Naive thymus-derived CD4-positive, alpha-beta T cell (primary cell): ENCODE measurements at regions of chr20 and their contacts with region 1.

Region 1: DNA sequence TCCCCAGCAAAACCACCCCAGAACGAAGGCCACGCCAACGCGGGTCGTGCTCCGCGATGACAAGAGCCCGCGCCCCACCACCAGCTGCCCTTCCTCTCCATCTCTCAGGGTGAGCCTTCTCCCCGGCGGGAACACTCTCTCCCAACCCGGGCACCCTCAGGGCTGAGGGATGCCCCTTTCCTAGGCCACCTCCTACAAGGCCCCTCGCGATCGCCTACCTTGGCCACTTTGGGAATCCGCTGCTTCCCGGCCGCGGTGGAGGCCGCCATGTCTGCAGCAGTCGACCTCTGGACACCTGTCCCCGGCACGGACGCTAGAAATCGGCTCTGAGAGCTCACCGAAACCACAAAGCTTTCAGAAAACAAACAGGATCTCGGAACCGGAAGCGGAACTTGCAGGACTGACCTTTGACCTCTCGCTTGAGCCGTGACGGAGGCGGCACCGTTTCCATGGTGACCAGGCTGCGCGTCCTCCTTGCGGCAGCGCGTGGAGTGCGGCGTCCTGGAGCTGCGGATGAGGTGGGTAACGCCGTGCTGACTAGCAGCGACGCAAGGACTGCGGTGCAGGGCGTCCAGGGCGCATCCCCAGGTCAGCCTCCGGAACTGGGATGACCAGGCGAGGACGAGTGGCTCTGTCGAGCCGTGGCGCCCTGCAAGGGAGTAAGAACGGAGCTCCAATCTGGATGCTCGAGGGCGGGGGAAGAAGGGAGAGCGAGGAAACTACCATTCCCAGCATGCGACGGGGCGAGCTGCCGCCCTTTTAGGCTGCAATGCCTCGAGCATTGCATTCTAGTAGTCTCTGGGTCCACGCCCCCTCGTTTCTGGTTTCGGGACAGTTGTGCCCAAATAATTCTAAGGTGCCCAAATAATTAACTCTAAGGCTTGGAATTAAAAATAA is at the starts of genes CFAP61 and CRNKL1:
- DNase-seq: peak; percentile 95 to 99 (median 98)
- ATAC-seq: peak; percentile 96
- H3K4me3 ChIP-seq: peak within 1 kb of the TSS; percentile 99
- H3K4me3 Mint-ChIP-seq: peak within 1 kb of the TSS; percentile 94 to 100 (median 99)
- H3K27ac ChIP-seq: peak within 1 kb of the TSS; percentile 93
- H3K27ac Mint-ChIP-seq: peak within 1 kb of the TSS; percentile 94 to 100 (median 98)
- H3K4me1 ChIP-seq: peaks cover 0 to 16% of the 10 kb centered on the region in 2 donors
- H3K4me1 Mint-ChIP-seq: peaks cover 16 to 42% (median 31%) of the 10 kb centered on the region in 7 donors
- H3K27me3 ChIP-seq: no peaks in the 10 kb centered on the region
- H3K27me3 Mint-ChIP-seq: peaks cover 0 to 6% (median 0%) of the 10 kb centered on the region in 5 donors
- total RNA-seq, gene CFAP61: not detected
- total RNA-seq, gene CRNKL1: 17.4 to 32.1 (median 21.6) TPM

Region 2: DNA sequence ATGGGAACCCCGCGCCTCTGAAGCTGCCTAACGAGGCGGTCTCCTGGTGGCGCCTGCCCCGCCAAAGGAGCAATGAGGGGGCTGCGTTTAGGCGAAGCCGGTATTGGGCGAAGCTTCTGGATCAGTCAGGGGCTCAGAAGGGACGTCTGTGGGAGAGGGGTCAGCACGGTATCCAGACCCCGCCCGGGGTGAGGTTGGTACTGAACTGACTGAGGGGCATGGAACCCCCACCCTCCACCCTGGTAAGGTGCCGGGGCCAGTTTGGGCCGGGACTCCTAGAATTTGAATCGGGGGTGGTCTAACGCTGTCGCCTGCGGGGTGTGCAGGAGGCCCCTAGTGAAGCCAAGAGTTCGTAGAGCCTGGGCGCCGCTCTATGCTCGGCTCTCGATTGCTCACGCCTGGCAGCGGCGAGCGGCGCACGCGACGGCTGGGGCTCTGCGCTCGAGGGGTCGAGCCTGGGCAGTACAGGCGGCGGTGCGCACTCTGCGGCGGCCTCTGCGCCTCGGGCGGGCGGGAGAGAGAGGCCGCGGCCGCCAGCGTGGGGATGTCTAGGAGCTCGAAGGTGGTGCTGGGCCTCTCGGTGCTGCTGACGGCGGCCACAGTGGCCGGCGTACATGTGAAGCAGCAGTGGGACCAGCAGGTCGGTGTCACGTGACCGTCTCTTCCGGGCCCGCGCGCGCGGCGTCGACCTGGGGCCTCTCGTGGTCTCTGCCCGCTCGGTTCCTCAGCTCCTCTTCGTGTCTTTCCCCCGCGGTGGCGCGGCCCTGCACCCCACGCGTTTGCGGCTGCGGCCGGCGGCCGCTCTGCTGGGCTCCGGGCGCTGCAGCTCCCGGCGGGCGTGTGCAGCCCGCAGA is 1914.7 kb before region 1 on chr20 and contains the starts of genes KAT14 and PET117:
- CTCF ChIA-PET with region 1: no interaction called
- POLR2A ChIA-PET with region 1: interaction called, 3 read pairs
- intact Hi-C with region 1: loop called in 1 of 2 experiments (anchors 2 kb)
- DNase-seq: peak; percentile 85 to 96 (median 93)
- ATAC-seq: peak; percentile 98
- H3K4me3 ChIP-seq: peak within 1 kb of the TSS; percentile 99
- H3K4me3 Mint-ChIP-seq: peak within 1 kb of the TSS; percentile 76 to 92 (median 88)
- H3K27ac ChIP-seq: peak within 1 kb of the TSS; percentile 89
- H3K27ac Mint-ChIP-seq: peak within 1 kb of the TSS; percentile 85 to 95 (median 92)
- H3K4me1 ChIP-seq: peaks cover 13 to 15% of the 10 kb centered on the region in 2 donors
- H3K4me1 Mint-ChIP-seq: peaks cover 23 to 44% (median 31%) of the 10 kb centered on the region in 7 donors
- H3K27me3 ChIP-seq: no peaks in the 10 kb centered on the region
- H3K27me3 Mint-ChIP-seq: peaks cover 0 to 7% (median 0%) of the 10 kb centered on the region in 5 donors
- total RNA-seq, gene KAT14: 12.3 to 26.7 (median 16.2) TPM
- total RNA-seq, gene PET117: 9.0 to 20.3 (median 11.7) TPM

Region 3: DNA sequence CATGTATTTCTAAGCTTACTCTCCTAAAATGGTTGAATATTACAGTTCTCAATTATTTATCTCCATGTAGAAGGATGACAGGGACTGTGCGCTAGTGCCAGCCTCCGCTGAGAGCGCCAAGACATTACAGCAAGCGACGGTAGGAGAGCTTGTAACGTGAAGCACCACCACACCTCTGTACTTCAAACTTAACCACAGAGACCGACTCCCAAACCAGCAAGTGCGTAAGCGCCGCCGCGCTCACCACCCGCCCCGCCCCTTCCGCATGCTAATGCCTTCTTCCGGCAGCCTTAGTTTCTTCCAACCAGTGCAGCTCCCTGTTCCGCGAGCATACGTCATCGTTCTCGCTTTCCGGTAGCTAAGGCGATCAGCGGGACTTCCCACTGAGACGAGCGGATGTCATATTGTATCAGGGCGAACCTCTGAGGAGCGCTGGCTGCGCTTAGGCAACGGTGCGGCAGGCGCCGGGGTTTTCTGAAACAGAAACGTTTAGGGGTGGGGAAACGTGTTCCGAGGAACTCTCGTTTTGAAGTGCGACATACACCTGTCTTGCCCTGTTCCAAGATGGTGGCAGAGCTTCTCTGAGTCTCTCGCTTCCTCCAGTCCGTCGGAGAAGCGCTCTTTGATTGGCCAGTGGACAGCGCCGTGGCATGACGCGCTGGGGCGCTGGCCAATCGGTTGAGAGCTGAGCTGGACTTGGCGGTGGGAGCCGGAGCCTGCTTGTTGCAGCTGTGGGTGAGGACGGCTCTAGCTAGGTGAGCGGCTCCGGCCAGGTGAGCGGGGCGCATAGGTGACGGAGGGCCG is 1544.9 kb before region 1 on chr20 and contains the start of gene SEC23B:
- CTCF ChIA-PET with region 1: no interaction called
- POLR2A ChIA-PET with region 1: interaction called, 6 read pairs
- intact Hi-C with region 1: loop called in 1 of 2 experiments (anchors 1 kb)
- DNase-seq: peak; percentile 88 to 100 (median 99)
- ATAC-seq: peak; percentile 91
- H3K4me3 ChIP-seq: peak within 1 kb of the TSS; percentile 74
- H3K4me3 Mint-ChIP-seq: peak within 1 kb of the TSS; percentile 91 to 100 (median 100)
- H3K27ac ChIP-seq: peak within 1 kb of the TSS; percentile 90
- H3K27ac Mint-ChIP-seq: peak within 1 kb of the TSS; percentile 99 to 100 (median 100)
- H3K4me1 ChIP-seq: peaks cover 17 to 28% of the 10 kb centered on the region in 2 donors
- H3K4me1 Mint-ChIP-seq: peaks cover 25 to 59% (median 50%) of the 10 kb centered on the region in 7 donors
- H3K27me3 ChIP-seq: no peaks in the 10 kb centered on the region
- H3K27me3 Mint-ChIP-seq: peaks cover 0 to 2% (median 0%) of the 10 kb centered on the region in 5 donors
- total RNA-seq, gene SEC23B: 39.0 to 102 (median 40.9) TPM

Region 4: DNA sequence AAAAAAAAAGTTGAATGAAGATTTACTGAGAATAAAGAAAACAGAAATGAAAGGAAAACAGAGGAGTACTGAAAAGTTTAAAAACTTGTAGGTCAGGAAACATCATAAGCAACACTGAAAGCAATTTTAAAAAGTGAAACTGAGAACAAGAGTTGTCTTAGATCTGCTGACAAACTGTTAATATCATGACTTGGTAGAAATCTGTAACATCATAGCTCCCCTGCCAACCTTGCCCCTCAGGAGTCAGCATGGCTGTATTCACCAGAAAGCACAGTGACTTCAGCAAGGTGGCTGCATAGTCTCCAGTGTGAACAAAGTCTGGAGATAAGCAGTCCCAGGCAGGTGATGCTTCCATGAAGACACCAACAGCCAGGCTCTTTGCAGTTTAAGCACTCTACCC is 29.8 kb before region 1 on chr20:
- CTCF ChIA-PET with region 1: interaction called, 29 read pairs
- POLR2A ChIA-PET with region 1: interaction called, 31 read pairs
- intact Hi-C with region 1: loop called (anchors 1 kb)
- DNase-seq: no peak
- ATAC-seq: no peak
- H3K4me3 ChIP-seq: no peak overlapping the region
- H3K4me3 Mint-ChIP-seq: peak overlapping the region in 1 of 10 donors; percentile 70
- H3K27ac ChIP-seq: no peak overlapping the region
- H3K27ac Mint-ChIP-seq: peak overlapping the region in 5 of 9 donors; percentile 25 to 82 (median 41)
- H3K4me1 ChIP-seq: peaks cover 9 to 28% of the 10 kb centered on the region in 2 donors
- H3K4me1 Mint-ChIP-seq: peaks cover 38 to 70% (median 57%) of the 10 kb centered on the region in 7 donors
- H3K27me3 ChIP-seq: no peaks in the 10 kb centered on the region
- H3K27me3 Mint-ChIP-seq: no peaks in the 10 kb centered on the region

Region 5: GRCh38 chr20:20712474-20713243 is 660.3 kb after region 1 on chr20 and contains the start of gene RALGAPA2:
- CTCF ChIA-PET with region 1: no interaction called
- POLR2A ChIA-PET with region 1: no interaction called
- intact Hi-C with region 1: loop called (anchors 1 kb)
- DNase-seq: peak; percentile 91 to 97 (median 95)
- ATAC-seq: peak; percentile 98
- H3K4me3 ChIP-seq: peak within 1 kb of the TSS; percentile 97
- H3K4me3 Mint-ChIP-seq: peak within 1 kb of the TSS; percentile 89 to 98 (median 96)
- H3K27ac ChIP-seq: peak within 1 kb of the TSS; percentile 91
- H3K27ac Mint-ChIP-seq: peak within 1 kb of the TSS; percentile 90 to 98 (median 95)
- H3K4me1 ChIP-seq: peaks cover 9% of the 10 kb centered on the region in 2 donors
- H3K4me1 Mint-ChIP-seq: peaks cover 23 to 41% (median 29%) of the 10 kb centered on the region in 7 donors
- H3K27me3 ChIP-seq: no peaks in the 10 kb centered on the region
- H3K27me3 Mint-ChIP-seq: no peaks in the 10 kb centered on the region
- total RNA-seq, gene RALGAPA2: 27.5 to 45.4 (median 35.1) TPM

Region 6: DNA sequence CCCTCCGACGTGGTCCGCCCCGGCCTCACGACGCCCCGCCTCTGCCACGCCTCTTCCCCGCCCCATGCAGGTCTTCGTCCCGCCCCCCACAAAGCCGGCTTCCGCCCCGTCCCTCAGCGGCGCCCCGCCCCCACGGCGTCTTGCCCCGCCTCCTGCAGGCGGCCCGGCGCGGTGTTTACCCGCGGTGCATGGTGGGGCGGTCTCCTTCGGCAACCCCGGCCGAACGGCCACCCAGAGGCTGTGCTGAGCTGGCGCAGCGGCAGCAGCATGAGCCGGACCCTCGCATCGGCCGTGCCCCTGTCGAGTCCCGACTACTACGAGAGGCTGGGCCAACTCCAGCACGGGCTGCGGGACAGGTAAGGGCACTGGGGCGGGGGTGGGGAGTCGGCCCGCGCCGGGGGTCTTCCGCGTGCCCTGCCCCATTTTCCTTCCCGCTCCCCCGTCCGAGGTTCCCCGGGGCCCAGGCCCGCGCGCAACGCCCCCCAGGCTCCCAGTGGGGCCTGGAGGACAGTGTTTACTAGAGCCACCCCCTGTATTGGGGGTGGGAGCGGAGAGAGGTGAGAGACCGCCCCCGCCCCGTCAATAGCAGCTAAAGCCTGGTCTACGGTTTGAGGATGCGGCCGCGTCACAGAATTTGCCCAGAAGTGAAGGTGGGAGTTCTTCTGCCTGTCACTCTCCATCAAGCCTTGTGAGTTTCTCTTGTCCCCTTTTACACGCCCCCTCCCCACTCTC is 1073.7 kb after region 1 on chr20 and contains the start of gene KIZ:
- CTCF ChIA-PET with region 1: no interaction called
- POLR2A ChIA-PET with region 1: no interaction called
- intact Hi-C with region 1: loop called (anchors 1 kb)
- DNase-seq: peak; percentile 93 to 100 (median 97)
- ATAC-seq: peak; percentile 100
- H3K4me3 ChIP-seq: peak within 1 kb of the TSS; percentile 56
- H3K4me3 Mint-ChIP-seq: peak within 1 kb of the TSS; percentile 86 to 98 (median 90)
- H3K27ac ChIP-seq: peak within 1 kb of the TSS; percentile 77
- H3K27ac Mint-ChIP-seq: peak within 1 kb of the TSS; percentile 70 to 97 (median 88)
- H3K4me1 ChIP-seq: peaks cover 10 to 16% of the 10 kb centered on the region in 2 donors
- H3K4me1 Mint-ChIP-seq: peaks cover 11 to 35% (median 21%) of the 10 kb centered on the region in 7 donors
- H3K27me3 ChIP-seq: no peaks in the 10 kb centered on the region
- H3K27me3 Mint-ChIP-seq: peaks cover 0 to 4% (median 0%) of the 10 kb centered on the region in 5 donors
- total RNA-seq, gene KIZ: 15.6 to 47.4 (median 32.5) TPM